Psoas muscle (tissue), 8 donors: ENCODE measurements at regions of chr17 and their contacts with region 1.

Region 1: GRCh38 chr17:26782163-26782562 is 511.8 kb upstream of the WSB1 start:
- DNase-seq: no peak
- ATAC-seq: no peak
- H3K4me3 ChIP-seq: no peak overlapping the region
- H3K27ac ChIP-seq: no peak overlapping the region
- H3K4me1 ChIP-seq: no peaks in the 10 kb centered on the region
- H3K27me3 ChIP-seq: peaks cover 0 to 6% (median 2%) of the 10 kb centered on the region in 3 donors
- CTCF ChIP-seq: no peak

Region 2: GRCh38 chr17:26731005-26731921 is 50.9 kb before region 1 on chr17:
- intact Hi-C with region 1: no loop called
- DNase-seq: peak in 1 of 2 donors; percentile 46
- ATAC-seq: no peak
- H3K4me3 ChIP-seq: no peak overlapping the region
- H3K27ac ChIP-seq: no peak overlapping the region
- H3K4me1 ChIP-seq: no peaks in the 10 kb centered on the region
- H3K27me3 ChIP-seq: peaks cover 0 to 2% (median 0%) of the 10 kb centered on the region in 3 donors
- CTCF ChIP-seq: no peak

Region 3: DNA sequence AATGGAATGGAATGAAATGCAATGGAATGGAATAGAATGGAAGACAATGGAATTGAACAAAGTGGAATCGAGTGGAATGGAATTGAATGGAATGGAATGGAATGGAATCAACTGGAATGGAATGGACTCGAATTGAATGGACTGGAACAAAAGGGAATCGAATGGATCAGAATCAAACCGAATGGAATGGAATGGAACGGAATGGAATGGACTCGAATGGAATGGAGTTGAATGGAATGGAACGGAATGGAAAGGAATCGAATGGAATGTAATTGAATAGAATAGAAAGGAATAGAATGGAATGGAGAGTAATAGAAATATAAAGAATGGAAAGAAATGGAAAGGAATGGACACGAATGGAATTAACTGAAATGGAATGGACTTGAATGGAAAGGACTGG is 36.6 kb after region 1 on chr17:
- intact Hi-C with region 1: loop called in 1 of 2 experiments (anchors 5 kb)
- DNase-seq: no peak
- ATAC-seq: no peak
- H3K4me3 ChIP-seq: no peak overlapping the region
- H3K27ac ChIP-seq: no peak overlapping the region
- H3K4me1 ChIP-seq: no peaks in the 10 kb centered on the region
- H3K27me3 ChIP-seq: no peaks in the 10 kb centered on the region
- CTCF ChIP-seq: no peak